ENCODE measurements at regions of chr17 and their contacts with region 1.

Region 1: DNA sequence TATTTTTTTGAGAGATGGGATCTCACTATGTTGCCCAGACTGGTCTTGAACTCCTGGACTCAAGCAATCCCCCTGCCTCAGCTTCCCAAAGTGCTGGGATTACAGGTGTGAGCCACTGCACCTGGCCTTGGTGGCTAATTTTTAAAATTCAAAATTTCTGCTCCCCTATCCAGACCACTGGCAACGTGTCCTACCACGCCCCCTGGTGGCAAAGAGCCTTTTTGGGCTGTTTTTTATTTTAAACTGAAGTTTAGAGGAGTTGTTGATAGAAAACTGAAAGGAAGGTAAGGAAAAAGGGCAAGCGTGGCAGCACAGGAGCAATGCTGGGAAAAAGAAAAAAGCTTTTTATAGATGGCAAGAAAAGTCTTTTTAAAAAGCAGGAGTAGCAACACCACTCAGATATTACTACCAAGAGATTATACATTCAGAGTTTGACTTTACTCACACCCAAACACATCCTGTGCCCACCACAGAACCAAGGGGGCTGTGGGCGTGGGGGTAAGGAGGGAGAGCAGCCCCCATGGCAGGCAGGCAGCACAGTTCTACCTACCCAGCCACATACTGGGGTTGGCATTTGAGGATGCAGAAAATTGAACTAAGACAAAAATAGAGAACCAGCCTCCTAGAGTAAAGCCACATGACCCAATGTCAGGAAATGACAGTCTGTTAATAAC is 4.2 kb upstream of the MXRA7 start:
- DNase-seq: peak; percentile 75
- ATAC-seq: peak; percentile 7
- H3K4me3 ChIP-seq: peak overlapping the region in 3 of 5 experiments; percentile 11 to 20 (median 12)
- H3K4me3 Mint-ChIP-seq: peak overlapping the region; percentile 62
- H3K27ac ChIP-seq: peak overlapping the region; percentile 46 to 72
- H3K27ac Mint-ChIP-seq: peak overlapping the region; percentile 21
- H3K4me1 ChIP-seq: peaks cover 22 to 31% of the 10 kb centered on the region in 2 donors
- H3K4me1 Mint-ChIP-seq: peaks cover 25% of the 10 kb centered on the region
- H3K27me3 ChIP-seq: no peaks in the 10 kb centered on the region
- H3K27me3 Mint-ChIP-seq: no peaks in the 10 kb centered on the region
- CTCF ChIP-seq: peak; percentile 91

Region 2: DNA sequence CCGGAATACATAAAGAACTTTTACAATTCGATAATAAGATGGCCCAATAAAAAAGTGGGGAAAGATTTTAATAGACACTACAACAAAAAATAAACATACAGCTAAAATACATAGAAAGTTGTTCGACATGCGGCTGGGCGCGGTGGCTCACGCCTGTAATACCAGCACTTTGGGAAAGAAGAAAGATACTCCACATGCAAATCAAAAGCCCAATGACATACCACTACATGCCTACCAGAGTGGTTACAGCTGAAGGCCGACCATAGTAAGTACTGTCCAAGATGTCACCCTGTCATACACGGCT is 165.8 kb before region 1 on chr17:
- CTCF ChIA-PET with region 1: no interaction called
- POLR2A ChIA-PET with region 1: no interaction called
- intact Hi-C with region 1: no loop called
- DNase-seq: no peak
- ATAC-seq: no peak
- H3K4me3 ChIP-seq: no peak overlapping the region
- H3K4me3 Mint-ChIP-seq: no peak overlapping the region
- H3K27ac ChIP-seq: no peak overlapping the region
- H3K27ac Mint-ChIP-seq: no peak overlapping the region
- H3K4me1 ChIP-seq: peaks cover 4 to 8% of the 10 kb centered on the region in 2 donors
- H3K4me1 Mint-ChIP-seq: peaks cover 13% of the 10 kb centered on the region
- H3K27me3 ChIP-seq: peaks cover 0 to 4% (median 1%) of the 10 kb centered on the region in 4 experiments
- H3K27me3 Mint-ChIP-seq: peaks cover 6% of the 10 kb centered on the region
- CTCF ChIP-seq: no peak

Region 3: GRCh38 chr17:76671123-76671911 is 43.6 kb before region 1 on chr17:
- CTCF ChIA-PET with region 1: interaction called, 3 read pairs
- POLR2A ChIA-PET with region 1: no interaction called
- intact Hi-C with region 1: loop called (anchors 2 kb)
- DNase-seq: peak; percentile 99
- ATAC-seq: peak; percentile 99
- H3K4me3 ChIP-seq: peak overlapping the region; percentile 66 to 92 (median 84)
- H3K4me3 Mint-ChIP-seq: peak overlapping the region; percentile 92
- H3K27ac ChIP-seq: peak overlapping the region; percentile 80 to 81
- H3K27ac Mint-ChIP-seq: peak overlapping the region; percentile 93
- H3K4me1 ChIP-seq: peaks cover 10 to 18% of the 10 kb centered on the region in 2 donors
- H3K4me1 Mint-ChIP-seq: peaks cover 25% of the 10 kb centered on the region
- H3K27me3 ChIP-seq: peaks cover 0 to 3% (median 1%) of the 10 kb centered on the region in 4 experiments
- H3K27me3 Mint-ChIP-seq: peaks cover 13% of the 10 kb centered on the region
- CTCF ChIP-seq: no peak

Region 4: DNA sequence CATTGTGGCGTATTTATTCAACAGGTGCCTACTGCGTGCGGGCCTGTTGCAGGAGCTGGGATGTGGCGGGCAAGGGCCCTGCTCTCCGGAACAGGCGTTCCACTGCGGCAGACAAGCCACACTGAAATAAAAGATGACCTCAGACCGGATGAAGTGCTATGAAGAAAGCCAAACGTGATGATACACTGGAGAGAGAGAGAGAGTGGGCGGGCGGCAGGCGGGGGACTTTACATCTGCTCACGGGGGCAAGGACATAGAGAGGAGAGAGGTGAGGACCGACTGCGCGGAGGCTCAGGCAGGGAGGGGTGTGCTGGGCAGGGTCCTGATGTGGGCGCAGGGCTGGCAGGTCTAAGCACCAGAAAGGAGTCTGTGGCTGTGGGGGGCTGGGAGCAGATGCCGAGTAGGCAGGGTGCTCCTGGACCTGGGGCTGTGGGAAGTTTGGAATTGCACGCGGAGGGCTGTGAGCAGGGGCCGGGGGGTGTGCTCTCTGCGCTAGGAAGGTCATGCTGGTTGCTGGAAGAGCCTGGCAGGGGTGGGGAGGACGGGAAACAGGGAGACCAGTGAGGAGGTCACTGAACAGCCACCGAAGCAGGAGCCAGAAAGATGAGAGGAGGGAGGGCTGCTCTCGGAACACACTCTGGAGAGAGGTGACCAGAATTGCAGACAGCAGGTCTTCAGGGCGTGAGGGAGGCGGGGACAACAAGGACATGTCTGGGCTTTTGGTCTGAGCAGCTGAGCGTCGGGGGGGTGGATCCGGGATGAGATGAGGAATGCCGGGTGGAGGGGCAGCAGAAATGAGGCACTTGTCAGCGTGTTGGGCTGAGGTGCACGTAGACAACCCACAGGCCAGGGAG is 14.1 kb before region 1 on chr17:
- CTCF ChIA-PET with region 1: interaction called, 25 read pairs
- POLR2A ChIA-PET with region 1: no interaction called
- intact Hi-C with region 1: no loop called
- DNase-seq: no peak
- ATAC-seq: no peak
- H3K4me3 ChIP-seq: no peak overlapping the region
- H3K4me3 Mint-ChIP-seq: no peak overlapping the region
- H3K27ac ChIP-seq: no peak overlapping the region
- H3K27ac Mint-ChIP-seq: no peak overlapping the region
- H3K4me1 ChIP-seq: peaks cover 7 to 12% of the 10 kb centered on the region in 2 donors
- H3K4me1 Mint-ChIP-seq: peaks cover 10% of the 10 kb centered on the region
- H3K27me3 ChIP-seq: peaks cover 0 to 5% (median 0%) of the 10 kb centered on the region in 4 experiments
- H3K27me3 Mint-ChIP-seq: peaks cover 3% of the 10 kb centered on the region
- CTCF ChIP-seq: no peak